Posterior vena cava (tissue), 2 donors: ENCODE measurements at regions of chr11 and their contacts with region 1.

Region 1: DNA sequence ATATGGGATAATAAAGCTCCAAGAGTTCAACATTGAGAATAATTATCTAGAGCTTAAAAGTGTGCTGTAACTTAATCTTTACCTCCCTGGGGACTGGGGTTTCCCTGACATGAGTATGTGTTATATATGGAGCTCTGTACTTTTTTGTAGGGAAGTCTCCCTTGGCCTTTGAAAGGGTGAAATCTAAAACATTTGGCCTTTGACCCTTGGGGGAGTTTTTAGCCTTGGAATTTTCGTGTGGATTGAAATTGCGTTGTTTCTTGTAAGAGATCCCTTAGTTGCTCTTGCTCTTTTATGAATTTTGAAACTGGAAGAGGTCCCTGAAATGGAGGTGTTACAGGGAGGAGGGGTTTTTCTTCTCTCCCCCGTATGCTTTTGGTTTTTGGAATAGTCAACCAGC is 450.0 kb downstream of the NELL1 start:
- DNase-seq: no peak

Region 2: GRCh38 chr11:19428206-19429002 is 1691.0 kb before region 1 on chr11:
- intact Hi-C with region 1: no loop called
- DNase-seq: no peak

Region 3: GRCh38 chr11:21072558-21072957 is 46.9 kb before region 1 on chr11:
- intact Hi-C with region 1: loop called in 1 of 2 experiments (anchors 2 kb)
- DNase-seq: no peak